ENCODE measurements at regions of chr16 and their contacts with region 1.

Region 1: GRCh38 chr16:6360641-6361040 is 972.0 kb upstream of the RBFOX1 start:
- DNase-seq: no peak
- H3K4me3 ChIP-seq: no peak overlapping the region
- H3K27ac ChIP-seq: no peak overlapping the region
- H3K4me1 ChIP-seq: no peaks in the 10 kb centered on the region
- H3K27me3 ChIP-seq: no peaks in the 10 kb centered on the region
- CTCF ChIP-seq: no peak
- EP300 ChIP-seq: no peak
- POLR2A ChIP-seq: no peak

Region 2: GRCh38 chr16:6095414-6095813 is 265.2 kb before region 1 on chr16:
- in situ Hi-C with region 1: no loop called
- intact Hi-C with region 1: no loop called
- DNase-seq: no peak
- H3K4me3 ChIP-seq: no peak overlapping the region
- H3K27ac ChIP-seq: no peak overlapping the region
- H3K4me1 ChIP-seq: no peaks in the 10 kb centered on the region
- H3K27me3 ChIP-seq: no peaks in the 10 kb centered on the region
- CTCF ChIP-seq: no peak
- EP300 ChIP-seq: no peak
- POLR2A ChIP-seq: no peak

Region 3: DNA sequence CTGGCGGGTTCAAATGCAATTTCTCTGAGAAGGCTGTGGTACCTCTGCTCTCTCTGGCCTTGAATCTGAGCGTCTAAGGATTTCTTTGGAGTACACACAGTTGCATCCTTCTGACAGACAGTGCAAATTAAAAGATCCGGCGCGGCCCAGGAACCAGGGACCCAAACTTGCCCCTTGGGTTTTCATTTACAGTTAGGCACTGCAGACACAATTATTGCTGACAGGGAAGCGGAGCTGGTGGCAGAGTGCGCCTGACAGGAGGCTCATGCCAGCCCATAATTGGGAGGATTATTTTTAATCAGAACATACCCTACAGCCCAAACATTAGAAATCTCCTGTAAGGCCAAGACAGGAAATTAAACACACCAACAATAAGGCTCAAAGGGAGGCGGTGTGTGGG is 51.4 kb before region 1 on chr16:
- in situ Hi-C with region 1: loop called in 1 of 4 experiments (anchors 10 kb)
- intact Hi-C with region 1: no loop called
- DNase-seq: no peak
- H3K4me3 ChIP-seq: no peak overlapping the region
- H3K27ac ChIP-seq: no peak overlapping the region
- H3K4me1 ChIP-seq: no peaks in the 10 kb centered on the region
- H3K27me3 ChIP-seq: no peaks in the 10 kb centered on the region
- CTCF ChIP-seq: no peak
- EP300 ChIP-seq: no peak
- POLR2A ChIP-seq: no peak

Measured in transverse colon (tissue), 4 donors.